Body of pancreas (tissue), 4 donors: ENCODE measurements at regions of chr19 and their contacts with region 1.

Region 1: GRCh38 chr19:49224856-49225255 is 67.3 kb downstream of the TRPM4 start:
- DNase-seq: peak; percentile 66 to 74 (median 69)
- ATAC-seq: peak; percentile 85
- H3K4me3 ChIP-seq: no peak overlapping the region
- H3K27ac ChIP-seq: no peak overlapping the region
- H3K4me1 ChIP-seq: no peaks in the 10 kb centered on the region
- H3K27me3 ChIP-seq: no peaks in the 10 kb centered on the region
- CTCF ChIP-seq: peak in 6 of 7 experiments; percentile 33 to 67 (median 55)
- POLR2A ChIP-seq: no peak

Region 2: DNA sequence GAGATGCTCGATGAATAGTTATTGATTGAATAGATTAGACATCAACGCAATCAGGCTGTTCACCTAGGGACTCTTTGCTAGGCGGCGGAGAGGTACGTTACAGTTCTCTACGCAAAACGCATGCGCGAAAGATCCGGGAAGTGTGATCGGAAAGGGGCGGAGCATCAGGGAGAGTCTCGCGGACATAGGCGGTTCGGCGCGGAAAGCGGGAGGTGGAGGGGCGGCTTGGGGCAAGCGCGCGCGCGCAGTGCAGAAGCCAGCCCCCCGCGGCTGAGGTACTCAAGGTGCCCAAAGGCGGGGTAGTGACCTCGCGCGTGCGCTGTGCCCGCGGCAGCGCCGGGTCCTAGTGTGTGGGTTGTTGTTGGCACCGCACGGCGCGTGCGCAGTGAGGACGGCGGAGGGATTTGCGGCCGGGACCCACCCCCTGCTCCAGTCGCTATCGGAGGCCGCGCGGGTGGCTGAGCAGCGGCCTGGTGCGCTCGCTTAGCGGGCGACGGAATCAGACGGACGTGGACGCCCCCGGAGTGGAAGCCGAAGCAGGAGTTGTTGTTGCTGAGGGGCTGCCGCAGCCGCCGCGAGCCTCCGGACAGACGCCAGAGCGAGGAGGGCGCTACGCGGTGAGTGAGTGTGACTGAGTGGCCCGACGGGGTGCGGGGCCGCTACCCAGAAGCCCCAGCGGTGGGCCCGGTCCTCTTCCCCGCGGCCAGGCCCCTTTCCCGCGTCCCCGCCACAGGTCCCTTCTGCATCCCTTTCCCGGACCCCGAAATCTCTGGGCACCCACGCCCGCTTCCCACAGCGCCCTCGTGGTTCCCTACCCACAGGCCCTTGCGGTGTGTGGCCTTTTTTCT is 139.6 kb before region 1 on chr19 and contains the start of gene SNRNP70:
- intact Hi-C with region 1: no loop called
- DNase-seq: peak; percentile 99 to 100 (median 100)
- ATAC-seq: peak; percentile 98
- H3K4me3 ChIP-seq: peak within 1 kb of the TSS; percentile 50 to 71
- H3K27ac ChIP-seq: peak within 1 kb of the TSS; percentile 75 to 84 (median 82)
- H3K4me1 ChIP-seq: peaks cover 49% of the 10 kb centered on the region
- H3K27me3 ChIP-seq: no peaks in the 10 kb centered on the region
- CTCF ChIP-seq: peak in 2 of 7 experiments; percentile 12 to 21
- POLR2A ChIP-seq: peak; percentile 81 to 95 (median 93)
- total RNA-seq, gene SNRNP70: 199 to 588 TPM

Region 3: DNA sequence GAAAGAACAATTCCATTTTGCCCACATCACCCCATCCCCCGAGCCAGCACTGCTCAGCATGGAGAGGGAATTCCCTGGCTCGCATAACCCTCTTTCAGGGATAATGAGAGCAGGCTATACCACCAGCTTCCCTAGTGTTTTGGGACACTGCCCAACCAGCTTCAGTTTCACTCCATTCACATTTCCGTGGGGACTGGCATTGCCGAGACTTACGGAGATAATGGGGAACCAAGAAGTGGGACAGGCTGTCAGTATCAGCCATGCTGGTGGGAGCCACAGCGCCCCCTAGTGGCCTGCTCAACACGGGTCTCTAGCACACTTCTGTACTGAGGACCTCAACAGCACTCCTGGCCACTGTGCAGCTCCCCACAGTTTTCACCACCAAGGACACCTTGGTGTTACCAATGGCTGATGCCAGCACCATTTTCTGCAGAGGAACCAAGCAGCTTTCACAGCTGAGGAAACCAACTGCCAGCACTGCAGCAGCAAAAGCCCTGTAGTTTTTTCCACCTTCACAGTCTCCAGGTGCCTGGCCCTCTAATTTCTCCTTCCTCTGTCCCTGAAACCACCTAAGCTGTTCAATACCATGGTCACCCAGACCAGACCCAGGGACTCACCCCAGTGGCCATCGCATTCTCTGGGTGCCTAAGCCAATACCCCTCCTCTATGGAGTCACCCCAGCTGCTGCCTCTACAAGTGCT is 76.5 kb after region 1 on chr19:
- intact Hi-C with region 1: no loop called
- DNase-seq: peak; percentile 63 to 81 (median 72)
- ATAC-seq: peak; percentile 80
- H3K4me3 ChIP-seq: no peak overlapping the region
- H3K27ac ChIP-seq: no peak overlapping the region
- H3K4me1 ChIP-seq: no peaks in the 10 kb centered on the region
- H3K27me3 ChIP-seq: no peaks in the 10 kb centered on the region
- CTCF ChIP-seq: peak; percentile 32 to 75 (median 63)
- POLR2A ChIP-seq: no peak

Region 4: GRCh38 chr19:49430678-49431329 is 205.9 kb after region 1 on chr19:
- intact Hi-C with region 1: loop called (anchors 10 kb)
- DNase-seq: no peak
- ATAC-seq: no peak
- H3K4me3 ChIP-seq: no peak overlapping the region
- H3K27ac ChIP-seq: no peak overlapping the region
- H3K4me1 ChIP-seq: peaks cover 18% of the 10 kb centered on the region
- H3K27me3 ChIP-seq: peaks cover 5 to 75% of the 10 kb centered on the region in 2 donors
- CTCF ChIP-seq: peak in 1 of 7 experiments; percentile 4
- POLR2A ChIP-seq: no peak